ENCODE measurements at regions of chr11 and their contacts with region 1.

Region 1: DNA sequence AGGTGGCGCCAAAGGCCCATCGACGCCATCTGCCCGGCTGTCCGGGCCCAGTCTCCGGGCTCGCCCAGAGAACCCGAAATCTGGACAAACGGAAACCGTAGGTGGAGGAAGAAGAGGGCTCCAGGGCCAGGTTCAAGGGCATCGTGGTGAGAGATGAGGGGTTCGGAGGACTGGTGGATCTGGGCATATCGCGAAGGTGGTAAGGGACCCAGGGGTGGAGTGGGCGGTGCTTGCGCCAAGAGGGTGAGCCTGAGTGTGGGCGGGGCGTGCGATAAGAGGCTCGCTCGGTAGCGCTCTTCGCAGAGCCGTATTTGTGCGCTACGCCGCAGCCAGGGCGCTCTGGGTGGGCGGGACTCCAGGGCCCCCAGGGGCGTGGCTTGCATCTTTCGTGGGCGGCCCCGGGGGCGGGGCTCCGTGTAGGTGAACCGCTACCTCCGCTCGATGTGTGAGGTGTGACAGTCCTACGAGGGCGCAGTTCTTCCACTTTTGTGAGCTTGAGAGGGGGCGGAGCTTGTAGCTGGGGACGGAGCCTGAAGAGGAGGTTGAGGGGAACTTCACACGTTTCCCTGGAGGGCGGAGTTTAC is 4.8 kb downstream of the CD248 start:
- DNase-seq: peak; percentile 88
- H3K4me3 ChIP-seq: peak overlapping the region; percentile 59 to 70
- H3K27ac ChIP-seq: peak overlapping the region; percentile 94 to 96
- H3K4me1 ChIP-seq: peaks cover 11 to 49% of the 10 kb centered on the region in 2 experiments; a peak in 2 of 4 replicates
- H3K27me3 ChIP-seq: no peaks in the 10 kb centered on the region
- CTCF ChIP-seq: peak; percentile 98
- EP300 ChIP-seq: no peak
- RAD21 ChIP-seq: peak; percentile 97

Region 2: GRCh38 chr11:66288671-66289547 is 23.1 kb before region 1 on chr11 and contains the start of gene YIF1A:
- CTCF ChIA-PET with region 1: interaction called, 63 read pairs
- POLR2A ChIA-PET with region 1: interaction called, 19 read pairs
- DNase-seq: peak; percentile 98
- H3K4me3 ChIP-seq: peak within 1 kb of the TSS; percentile 88 to 90
- H3K27ac ChIP-seq: peak within 1 kb of the TSS; percentile 93 to 97
- H3K4me1 ChIP-seq: peaks cover 7 to 36% of the 10 kb centered on the region in 2 experiments; a peak in 2 of 4 replicates
- H3K27me3 ChIP-seq: no peaks in the 10 kb centered on the region
- CTCF ChIP-seq: no peak
- EP300 ChIP-seq: no peak
- RAD21 ChIP-seq: no peak
- polyA plus RNA-seq, gene YIF1A: 115 and 123 TPM in 2 replicates

Region 3: DNA sequence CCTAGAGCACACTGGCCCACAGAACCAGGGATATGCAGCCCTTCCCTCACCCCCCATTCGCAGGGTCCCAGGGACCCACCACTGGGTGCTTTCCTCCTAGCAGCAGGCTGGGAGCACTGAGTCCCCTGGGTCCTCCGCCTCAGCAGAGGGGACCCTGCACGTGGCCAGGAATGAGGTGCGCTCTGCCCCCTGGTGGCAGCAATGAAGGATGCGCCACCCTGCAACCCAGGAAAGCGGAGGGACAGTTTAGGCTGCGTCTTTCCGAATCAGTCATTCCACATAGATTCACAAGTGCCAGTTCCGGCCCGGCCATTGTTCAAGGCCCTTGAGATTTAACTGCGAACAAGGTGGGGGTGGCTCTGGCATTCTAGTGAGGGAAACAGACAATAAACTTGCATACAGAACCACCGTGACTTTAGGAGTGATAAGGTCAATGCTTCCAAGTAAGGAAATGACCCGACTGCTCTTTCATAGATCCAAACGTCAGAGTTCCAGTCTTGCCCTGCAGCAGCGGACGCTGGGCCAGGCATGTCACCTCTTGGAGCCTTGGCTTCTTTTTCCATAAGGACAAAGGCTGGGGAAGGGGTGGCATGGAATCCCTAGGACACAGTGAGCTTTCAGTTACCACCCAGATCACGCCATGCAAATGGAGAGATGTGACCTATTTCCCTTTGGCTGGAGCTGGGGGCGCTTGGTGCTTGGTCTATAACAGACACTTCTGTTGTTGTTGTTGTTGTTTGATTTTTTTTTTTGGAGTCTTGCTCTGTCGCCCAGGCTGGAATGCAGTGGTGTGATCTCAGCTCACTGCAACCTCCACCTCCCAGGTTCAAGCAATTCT is 16.5 kb after region 1 on chr11:
- CTCF ChIA-PET with region 1: interaction called, 280 read pairs
- POLR2A ChIA-PET with region 1: interaction called, 17 read pairs
- DNase-seq: peak; percentile 93
- H3K4me3 ChIP-seq: peak overlapping the region in 1 of 2 experiments; percentile 21; a peak in 1 of 4 replicates
- H3K27ac ChIP-seq: peak overlapping the region; percentile 13 to 80; a peak in 3 of 4 replicates
- H3K4me1 ChIP-seq: peaks cover 28 to 36% of the 10 kb centered on the region in 2 experiments; a peak in 3 of 4 replicates
- H3K27me3 ChIP-seq: no peaks in the 10 kb centered on the region
- CTCF ChIP-seq: peak; percentile 94
- EP300 ChIP-seq: no peak
- RAD21 ChIP-seq: peak; percentile 88

Region 4: GRCh38 chr11:66344550-66345315 is 32.7 kb after region 1 on chr11 and contains the start of gene BRMS1:
- CTCF ChIA-PET with region 1: interaction called, 74 read pairs
- POLR2A ChIA-PET with region 1: interaction called, 19 read pairs
- DNase-seq: peak; percentile 93
- H3K4me3 ChIP-seq: peak within 1 kb of the TSS; percentile 95 to 96
- H3K27ac ChIP-seq: peak within 1 kb of the TSS; percentile 72 to 85
- H3K4me1 ChIP-seq: peaks cover 24 to 37% of the 10 kb centered on the region in 2 experiments; a peak in 3 of 4 replicates
- H3K27me3 ChIP-seq: no peaks in the 10 kb centered on the region
- CTCF ChIP-seq: no peak
- EP300 ChIP-seq: no peak
- RAD21 ChIP-seq: no peak
- polyA plus RNA-seq, gene BRMS1: 70.0 and 76.5 TPM in 2 replicates

Region 5: DNA sequence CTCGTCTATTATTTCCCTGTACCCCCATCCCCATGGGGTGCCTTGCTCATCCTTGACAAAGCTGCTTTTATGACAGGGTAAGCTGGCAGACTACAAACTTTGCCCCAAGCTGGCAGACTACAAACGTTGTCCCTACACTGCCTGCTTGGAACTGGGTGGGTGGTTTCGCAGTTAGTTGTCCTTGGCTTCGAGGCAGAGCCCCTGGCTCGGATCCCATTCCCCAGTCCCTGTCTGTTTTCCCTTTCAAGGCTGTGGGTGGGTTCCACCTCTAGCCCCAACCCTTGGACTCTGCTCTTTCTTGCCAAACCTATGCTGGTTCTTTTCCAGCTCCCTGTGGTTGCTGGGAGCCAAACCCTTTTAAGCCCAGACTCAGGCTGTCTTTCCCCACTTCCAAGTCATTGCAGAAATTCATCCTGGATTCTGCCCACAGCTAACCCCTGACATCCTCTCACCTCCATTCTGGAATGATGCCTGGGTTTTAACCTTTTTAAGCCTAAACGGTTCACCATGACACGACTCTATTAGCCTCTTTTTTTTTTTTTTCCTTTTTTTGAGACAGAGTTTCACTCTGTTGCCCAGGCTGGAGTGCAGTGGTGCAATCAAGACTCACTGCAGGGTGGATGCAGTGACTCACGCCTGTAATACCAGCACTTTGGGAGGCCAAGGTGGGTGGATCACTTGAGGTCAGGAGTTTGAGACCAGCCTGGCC is 295.2 kb after region 1 on chr11:
- CTCF ChIA-PET with region 1: no interaction called
- POLR2A ChIA-PET with region 1: no interaction called
- DNase-seq: no peak
- H3K4me3 ChIP-seq: no peak overlapping the region
- H3K27ac ChIP-seq: no peak overlapping the region
- H3K4me1 ChIP-seq: no peaks in the 10 kb centered on the region; a peak in 1 of 4 replicates
- H3K27me3 ChIP-seq: no peaks in the 10 kb centered on the region
- CTCF ChIP-seq: no peak
- EP300 ChIP-seq: no peak
- RAD21 ChIP-seq: no peak

Measured in SK-N-SH (cell line).